ENCODE measurements at regions of chr15 and their contacts with region 1.

Region 1: GRCh38 chr15:99409097-99409473 is 156.7 kb upstream of the MEF2A start:
- DNase-seq: peak; percentile 91

Region 2: GRCh38 chr15:99466701-99467337 is 57.7 kb after region 1 on chr15:
- intact Hi-C with region 1: no loop called
- DNase-seq: no peak

Region 3: GRCh38 chr15:99605490-99605931 is 196.4 kb after region 1 on chr15:
- intact Hi-C with region 1: no loop called
- DNase-seq: no peak

Region 4: GRCh38 chr15:99651023-99651807 is 242.1 kb after region 1 on chr15:
- intact Hi-C with region 1: loop called in 1 of 2 experiments (anchors 10 kb)
- DNase-seq: no peak

Measured in posterior vena cava (tissue), 2 donors.